Sciatic nerve (tissue), 2 donors: ENCODE measurements at regions of chr10 and their contacts with region 1.

Region 1: DNA sequence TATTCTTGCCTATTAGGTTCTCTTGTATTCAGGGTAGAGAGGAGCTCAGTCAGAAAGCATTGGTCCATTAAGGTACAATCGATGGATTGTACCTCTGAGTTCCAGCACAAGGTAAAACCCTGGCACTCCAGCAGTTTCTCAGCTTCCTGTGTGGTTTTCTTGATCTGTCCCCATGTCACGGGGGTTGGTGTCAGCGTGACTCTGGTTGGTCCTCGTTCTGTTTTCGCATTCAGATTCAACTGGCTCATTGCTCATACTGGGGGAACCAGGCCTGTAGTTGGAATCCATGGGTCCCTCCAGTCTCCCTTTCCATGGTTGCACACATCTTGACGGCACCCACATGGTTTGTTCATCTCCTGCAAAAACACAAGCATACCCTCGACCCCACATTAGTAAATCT is 32.7 kb upstream of the RASGEF1A start:
- DNase-seq: no peak
- ATAC-seq: no peak

Region 2: GRCh38 chr10:42952349-42952748 is 347.2 kb before region 1 on chr10:
- intact Hi-C with region 1: no loop called
- DNase-seq: peak; percentile 46
- ATAC-seq: peak; percentile 44

Region 3: DNA sequence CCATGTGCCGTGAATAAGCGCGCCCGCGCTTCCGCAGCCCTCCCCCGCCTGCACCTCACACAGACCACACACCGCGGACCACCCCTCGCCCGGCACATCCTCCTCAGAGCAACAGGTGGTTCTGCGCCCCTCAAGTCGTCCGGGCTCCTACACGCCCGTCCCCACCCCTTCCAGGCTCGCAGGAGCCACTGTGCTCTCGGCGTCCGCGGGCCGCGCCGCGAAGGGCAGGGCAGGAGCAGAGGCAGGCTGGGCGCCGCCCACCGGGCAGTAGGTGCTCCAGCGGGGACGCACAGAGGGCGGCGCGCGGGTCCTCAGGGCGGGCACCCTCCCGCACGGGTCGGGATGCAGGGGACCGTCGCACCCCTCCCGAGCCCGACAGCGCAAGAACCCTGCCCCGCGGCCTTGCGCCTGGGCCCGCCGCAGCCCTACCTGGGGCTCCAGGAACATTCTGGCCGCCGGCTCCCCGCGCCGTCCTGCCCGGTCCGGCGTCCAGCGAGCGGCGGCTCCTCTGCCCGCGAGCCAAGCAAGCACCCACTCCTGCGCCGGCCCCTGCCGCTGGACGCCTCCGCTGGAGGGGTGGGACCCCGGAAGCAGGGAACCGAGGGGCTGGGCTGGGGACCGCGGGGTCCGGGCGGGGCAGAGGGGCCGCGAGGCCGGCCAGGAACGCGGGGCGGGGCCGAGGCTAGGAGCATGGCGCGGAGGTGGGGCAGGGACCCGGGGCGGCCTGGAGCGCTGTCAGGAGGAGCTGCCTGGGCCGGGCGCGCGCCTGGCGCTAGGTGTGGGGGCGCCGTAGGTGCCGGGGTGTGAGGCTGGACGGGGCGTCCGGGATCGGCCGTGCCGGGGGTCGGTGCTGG is 70.1 kb before region 1 on chr10:
- intact Hi-C with region 1: no loop called
- DNase-seq: peak; percentile 61
- ATAC-seq: no peak

Region 4: GRCh38 chr10:43354879-43355380 is 55.4 kb after region 1 on chr10:
- intact Hi-C with region 1: no loop called
- DNase-seq: no peak
- ATAC-seq: no peak

Region 5: DNA sequence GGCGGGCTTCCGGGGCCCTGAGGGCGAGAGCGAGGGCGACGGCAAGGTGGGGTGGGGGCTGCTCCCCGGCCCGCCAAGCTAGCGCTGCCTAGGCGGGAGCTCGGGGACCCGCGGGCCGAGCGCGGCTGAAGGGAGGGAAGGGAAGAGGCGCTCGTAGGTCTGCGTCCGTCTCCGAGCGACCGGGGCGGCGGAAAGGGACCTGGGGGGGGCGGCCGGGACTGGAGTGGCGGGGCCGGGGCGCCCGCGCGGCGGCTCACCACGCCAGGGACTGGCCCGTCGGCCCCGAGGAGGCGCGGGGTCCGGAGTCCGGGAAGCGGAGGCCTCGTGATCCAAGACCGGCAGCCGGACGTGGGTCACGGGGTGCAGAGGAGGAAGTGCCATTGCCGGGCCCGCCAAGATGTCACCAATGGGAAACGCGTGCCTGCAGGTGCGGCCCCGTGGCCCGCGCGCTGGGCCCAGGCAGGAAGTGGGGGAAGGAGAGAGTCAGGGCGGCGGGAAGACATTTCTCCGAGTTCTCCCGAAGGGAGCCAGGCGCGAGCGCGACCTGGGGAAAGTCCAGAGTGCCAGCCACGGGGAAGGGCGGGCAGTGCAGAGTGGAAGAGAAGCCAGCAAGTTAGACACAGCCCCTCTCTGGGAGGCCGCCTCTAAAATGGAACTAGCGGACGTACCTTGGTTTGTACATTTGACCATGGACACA is 97.5 kb after region 1 on chr10:
- intact Hi-C with region 1: no loop called
- DNase-seq: peak; percentile 91
- ATAC-seq: peak; percentile 91

Region 6: GRCh38 chr10:43461950-43462349 is 162.4 kb after region 1 on chr10:
- intact Hi-C with region 1: loop called (anchors 5 kb)
- DNase-seq: no peak
- ATAC-seq: peak; percentile 88